ENCODE measurements at regions of chr20 and their contacts with region 1.

Region 1: GRCh38 chr20:33933469-33933909 is 60.2 kb upstream of the RALY start:
- DNase-seq: peak; percentile 26 to 75
- ATAC-seq: peak; percentile 70 to 82 (median 72)
- H3K4me3 ChIP-seq: no peak overlapping the region
- H3K4me3 Mint-ChIP-seq: no peak overlapping the region
- H3K27ac ChIP-seq: no peak overlapping the region
- H3K27ac Mint-ChIP-seq: no peak overlapping the region
- H3K4me1 ChIP-seq: no peaks in the 10 kb centered on the region
- H3K4me1 Mint-ChIP-seq: no peaks in the 10 kb centered on the region
- H3K27me3 ChIP-seq: no peaks in the 10 kb centered on the region
- H3K27me3 Mint-ChIP-seq: no peaks in the 10 kb centered on the region
- CTCF ChIP-seq: peak; percentile 19

Region 2: DNA sequence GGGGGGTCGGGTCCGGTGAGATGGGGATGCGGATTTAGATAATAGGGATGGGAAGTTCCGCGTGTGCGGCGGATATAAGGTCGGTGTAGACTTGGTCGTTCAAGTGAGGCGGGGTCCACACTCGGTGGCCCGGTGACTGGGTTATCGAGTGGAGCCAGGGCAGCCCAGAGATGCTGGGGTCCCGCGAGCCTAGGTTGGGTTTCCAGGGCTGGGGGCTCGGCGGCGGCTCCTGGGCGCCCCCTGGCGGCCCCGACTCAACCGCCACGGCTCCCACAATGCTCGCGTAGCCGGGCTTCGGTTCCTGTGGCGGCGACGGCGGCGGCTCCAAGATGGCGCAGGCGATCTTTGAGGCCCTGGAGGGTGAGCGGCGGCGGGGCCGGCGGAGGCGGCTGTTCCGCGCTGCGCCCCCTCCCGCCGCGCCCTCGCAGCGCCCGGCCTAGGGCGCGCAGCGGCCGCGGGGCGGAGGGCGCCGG is 201.8 kb before region 1 on chr20 and contains the start of gene ZNF341:
- intact Hi-C with region 1: no loop called
- DNase-seq: peak; percentile 87 to 93
- ATAC-seq: peak; percentile 87 to 94 (median 88)
- H3K4me3 ChIP-seq: peak within 1 kb of the TSS; percentile 65
- H3K4me3 Mint-ChIP-seq: peak within 1 kb of the TSS; percentile 90
- H3K27ac ChIP-seq: peak within 1 kb of the TSS; percentile 73
- H3K27ac Mint-ChIP-seq: peak within 1 kb of the TSS; percentile 89 to 98
- H3K4me1 ChIP-seq: peaks cover 27% of the 10 kb centered on the region
- H3K4me1 Mint-ChIP-seq: peaks cover 16 to 25% of the 10 kb centered on the region in 2 donors
- H3K27me3 ChIP-seq: no peaks in the 10 kb centered on the region
- H3K27me3 Mint-ChIP-seq: no peaks in the 10 kb centered on the region
- CTCF ChIP-seq: peak; percentile 65
- total RNA-seq, gene ZNF341: 3.6 to 5.1 (median 4.3) TPM

Region 3: GRCh38 chr20:34647737-34648136 is 714.2 kb after region 1 on chr20:
- intact Hi-C with region 1: loop called (anchors 5 kb)
- DNase-seq: no peak
- ATAC-seq: no peak
- H3K4me3 ChIP-seq: no peak overlapping the region
- H3K4me3 Mint-ChIP-seq: no peak overlapping the region
- H3K27ac ChIP-seq: no peak overlapping the region
- H3K27ac Mint-ChIP-seq: no peak overlapping the region
- H3K4me1 ChIP-seq: no peaks in the 10 kb centered on the region
- H3K4me1 Mint-ChIP-seq: no peaks in the 10 kb centered on the region
- H3K27me3 ChIP-seq: no peaks in the 10 kb centered on the region
- H3K27me3 Mint-ChIP-seq: no peaks in the 10 kb centered on the region
- CTCF ChIP-seq: no peak